CD8-positive, alpha-beta T cell (primary cell): ENCODE measurements at regions of chr6 and their contacts with region 1.

Region 1: DNA sequence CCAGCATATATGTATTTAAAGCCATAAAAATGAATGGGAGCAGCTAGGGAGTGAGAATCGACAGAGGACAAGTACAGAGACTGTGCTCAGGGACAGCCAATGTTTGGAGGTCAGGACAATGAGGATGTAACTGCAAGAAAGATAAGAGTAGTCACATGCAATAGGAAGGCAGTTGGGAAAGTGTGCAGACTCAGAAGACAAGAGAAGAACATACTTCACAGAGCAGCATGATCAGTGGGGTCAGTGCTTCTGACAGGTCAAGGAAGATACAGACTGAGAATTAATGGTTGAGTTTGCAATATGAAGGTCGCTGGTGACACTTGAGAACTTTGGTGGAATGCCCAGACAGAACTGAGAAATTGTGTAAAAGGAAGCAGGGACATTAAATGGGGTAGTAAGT is 25.1 kb downstream of the PLAGL1 start:
- DNase-seq: no peak
- ATAC-seq: no peak
- H3K4me3 ChIP-seq: no peak overlapping the region
- H3K4me3 Mint-ChIP-seq: no peak overlapping the region
- H3K27ac ChIP-seq: no peak overlapping the region
- H3K27ac Mint-ChIP-seq: no peak overlapping the region
- H3K4me1 ChIP-seq: no peaks in the 10 kb centered on the region
- H3K4me1 Mint-ChIP-seq: no peaks in the 10 kb centered on the region
- H3K27me3 ChIP-seq: no peaks in the 10 kb centered on the region
- H3K27me3 Mint-ChIP-seq: no peaks in the 10 kb centered on the region
- CTCF ChIP-seq: no peak

Region 2: DNA sequence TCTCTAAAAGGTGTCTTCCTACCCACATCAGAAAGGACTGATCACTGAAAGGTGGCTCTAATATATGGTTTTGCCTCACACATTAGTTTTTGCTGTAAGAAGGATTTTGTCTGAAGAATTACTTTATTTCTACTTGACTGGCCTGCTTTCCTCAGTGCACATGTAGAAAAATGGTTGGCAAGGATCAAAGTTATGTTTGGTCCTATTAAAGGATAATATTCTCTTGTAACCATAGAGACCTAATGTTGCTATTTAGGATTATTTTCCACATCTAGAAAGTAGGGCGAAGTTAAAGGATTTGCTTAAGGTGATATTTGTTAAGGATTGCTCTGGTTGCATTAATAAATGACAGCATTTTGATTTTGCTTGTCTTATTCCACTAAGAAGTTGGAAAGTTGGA is 264.5 kb before region 1 on chr6:
- CTCF ChIA-PET with region 1: no interaction called
- POLR2A ChIA-PET with region 1: no interaction called
- intact Hi-C with region 1: loop called in 1 of 2 experiments (anchors 10 kb)
- DNase-seq: no peak
- ATAC-seq: no peak
- H3K4me3 ChIP-seq: no peak overlapping the region
- H3K4me3 Mint-ChIP-seq: no peak overlapping the region
- H3K27ac ChIP-seq: no peak overlapping the region
- H3K27ac Mint-ChIP-seq: no peak overlapping the region
- H3K4me1 ChIP-seq: no peaks in the 10 kb centered on the region
- H3K4me1 Mint-ChIP-seq: no peaks in the 10 kb centered on the region
- H3K27me3 ChIP-seq: no peaks in the 10 kb centered on the region
- H3K27me3 Mint-ChIP-seq: no peaks in the 10 kb centered on the region
- CTCF ChIP-seq: no peak

Region 3: DNA sequence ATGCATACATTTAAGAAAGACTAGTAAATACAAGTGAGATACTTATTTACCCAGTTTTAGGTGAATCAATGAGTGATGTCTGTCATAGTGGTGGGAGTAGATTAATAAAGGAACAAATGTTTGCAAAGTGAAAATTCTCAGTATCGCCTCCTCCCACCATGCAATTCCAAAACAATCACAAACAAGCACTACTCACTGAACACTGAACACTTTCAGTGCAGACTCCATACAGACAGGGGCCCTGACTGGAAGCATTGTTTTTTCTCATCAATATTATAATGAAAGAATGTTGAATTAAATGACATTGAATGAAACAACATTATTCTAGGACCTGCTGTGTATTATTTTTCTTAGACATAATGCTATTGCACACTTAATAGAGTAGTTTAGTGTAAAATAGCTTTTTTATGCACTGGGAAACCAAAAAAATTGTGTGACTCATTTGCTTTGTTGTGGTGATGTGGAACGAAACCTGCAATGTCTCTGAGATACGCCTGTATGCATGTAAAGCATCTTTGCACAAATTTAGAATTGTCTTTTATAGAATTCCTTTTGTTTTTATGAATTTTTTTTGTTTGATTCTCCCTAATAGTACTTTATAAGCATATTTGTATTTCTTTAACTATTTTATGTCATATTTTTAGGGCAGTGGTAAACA is 619.7 kb after region 1 on chr6:
- CTCF ChIA-PET with region 1: no interaction called
- POLR2A ChIA-PET with region 1: no interaction called
- intact Hi-C with region 1: no loop called
- DNase-seq: peak in 3 of 9 experiments; percentile 6 to 45 (median 22)
- ATAC-seq: peak; percentile 62
- H3K4me3 ChIP-seq: no peak overlapping the region
- H3K4me3 Mint-ChIP-seq: no peak overlapping the region
- H3K27ac ChIP-seq: no peak overlapping the region
- H3K27ac Mint-ChIP-seq: no peak overlapping the region
- H3K4me1 ChIP-seq: peaks cover 13% of the 10 kb centered on the region
- H3K4me1 Mint-ChIP-seq: peaks cover 55% of the 10 kb centered on the region
- H3K27me3 ChIP-seq: no peaks in the 10 kb centered on the region
- H3K27me3 Mint-ChIP-seq: no peaks in the 10 kb centered on the region
- CTCF ChIP-seq: no peak